ENCODE measurements at regions of chr11 and their contacts with region 1.

Region 1: DNA sequence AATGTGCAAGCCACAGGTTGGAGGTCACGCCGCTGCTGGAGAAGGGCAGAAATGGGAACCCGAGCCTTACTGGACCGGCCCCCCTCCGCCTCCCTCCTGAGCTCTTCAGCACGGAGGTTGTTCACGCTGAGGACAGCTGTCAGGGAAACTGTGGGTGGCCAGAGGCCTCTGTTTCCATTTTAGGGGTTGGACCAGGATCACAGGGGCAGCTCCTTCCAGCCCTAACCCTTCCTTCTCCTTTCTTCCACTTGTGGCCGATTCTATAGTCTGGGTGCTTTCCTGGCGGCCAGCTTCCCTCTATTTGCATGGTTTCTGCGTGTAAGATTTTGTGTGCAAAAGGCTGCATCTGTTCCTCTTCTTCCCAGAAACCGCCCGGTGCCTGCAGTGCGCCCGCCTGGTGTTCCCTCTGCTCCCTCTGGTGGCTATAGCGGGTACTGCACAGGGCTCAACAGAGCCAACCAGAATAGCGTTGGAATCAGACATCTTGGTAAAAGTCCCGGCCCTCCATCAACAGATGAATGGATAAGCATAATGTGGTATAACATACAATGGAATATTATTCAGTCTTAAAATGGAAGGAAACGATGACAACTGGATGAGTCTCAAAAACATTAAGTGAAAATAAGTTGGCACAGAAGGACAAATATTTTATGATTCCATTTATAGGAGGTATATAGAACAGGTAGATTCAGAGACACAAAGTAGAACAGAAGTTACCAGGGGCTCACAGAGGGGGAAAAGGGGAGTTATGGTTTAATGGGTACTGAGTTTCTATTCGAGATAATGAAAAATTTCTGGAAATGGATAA is 8.4 kb upstream of the SLC22A8 start:
- DNase-seq: peak; percentile 86

Region 2: GRCh38 chr11:62383822-62384221 is 640.2 kb before region 1 on chr11:
- CTCF ChIA-PET with region 1: no interaction called
- POLR2A ChIA-PET with region 1: no interaction called
- DNase-seq: no peak

Region 3: DNA sequence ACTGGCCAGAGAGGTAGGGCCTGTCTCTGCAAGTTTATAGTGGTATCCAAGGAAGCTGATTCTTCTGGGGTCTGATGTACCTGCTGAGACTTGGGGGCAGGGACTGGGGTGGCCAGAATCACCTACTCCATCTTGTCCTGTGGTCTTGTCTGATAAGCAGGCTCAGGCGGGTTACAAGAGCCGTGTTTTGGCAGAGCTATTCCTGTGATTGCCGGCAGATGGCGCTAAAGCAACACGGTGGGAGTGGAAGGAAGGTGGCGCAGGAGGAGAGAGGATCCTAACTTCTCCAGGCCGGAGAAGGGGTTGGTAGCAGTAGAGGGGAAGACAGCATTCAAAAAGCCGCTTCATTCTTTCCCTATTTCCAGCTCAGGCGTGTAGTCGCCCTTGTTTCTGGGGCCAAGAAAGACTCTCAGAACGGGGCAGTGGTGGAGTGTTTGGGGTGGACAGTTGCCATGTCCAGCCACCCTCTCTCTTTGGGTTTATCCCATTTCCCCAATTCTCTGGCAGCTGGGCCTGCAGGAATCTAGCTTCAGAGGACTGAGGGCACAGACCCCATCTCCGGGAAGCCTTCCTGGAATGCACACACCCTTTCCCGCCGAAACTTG is 118.0 kb before region 1 on chr11:
- CTCF ChIA-PET with region 1: interaction called, 130 read pairs
- POLR2A ChIA-PET with region 1: interaction called, 6 read pairs
- DNase-seq: peak; percentile 87

Region 4: DNA sequence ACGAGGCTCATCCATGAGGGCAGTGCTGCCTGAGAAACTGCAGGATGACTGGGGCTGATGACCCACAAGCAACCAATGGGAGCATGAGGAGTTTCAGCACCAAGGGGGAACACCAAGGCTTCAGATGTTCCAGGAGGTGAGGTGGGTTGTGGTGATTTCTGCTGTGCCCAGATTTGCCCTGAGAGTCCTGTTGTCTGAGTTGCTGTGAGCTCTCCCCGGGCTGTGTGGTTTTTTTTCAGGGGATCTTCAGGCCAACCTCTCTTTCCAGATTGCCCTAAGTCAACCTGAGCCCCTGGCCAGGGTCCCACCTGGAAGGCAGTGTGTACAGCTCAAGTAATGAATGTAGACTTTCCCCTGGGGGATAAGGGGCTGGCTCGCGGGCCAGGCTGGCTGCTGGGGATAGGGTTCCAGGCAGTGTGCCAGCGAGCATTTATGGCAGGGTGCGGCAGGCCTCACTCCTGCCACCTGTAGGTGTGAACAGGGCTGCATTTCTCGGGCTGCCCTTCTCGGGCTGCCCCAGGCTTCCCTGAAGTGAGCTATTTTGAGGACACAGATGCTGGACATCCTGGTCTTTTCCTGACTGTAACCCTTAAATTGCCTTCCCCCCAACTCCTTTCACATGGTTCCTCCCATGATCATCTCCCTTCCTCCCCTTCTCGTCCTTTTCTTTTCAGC is 49.1 kb before region 1 on chr11:
- CTCF ChIA-PET with region 1: interaction called, 16 read pairs
- POLR2A ChIA-PET with region 1: no interaction called
- DNase-seq: peak; percentile 77

Region 5: GRCh38 chr11:63007920-63008319 is 16.1 kb before region 1 on chr11:
- CTCF ChIA-PET with region 1: interaction called, 22 read pairs
- POLR2A ChIA-PET with region 1: no interaction called
- DNase-seq: no peak